Activated B cell treated with CpG ODN at 0.5 μM for 24 hours (primary cell): ENCODE measurements at regions of chr10 and their contacts with region 1.

Region 1: GRCh38 chr10:124388823-124389612 is 29.7 kb downstream of the OAT start:
- DNase-seq: peak; percentile 97
- ATAC-seq: peak; percentile 99
- H3K4me3 Mint-ChIP-seq: peak overlapping the region; percentile 58
- H3K27ac Mint-ChIP-seq: no peak overlapping the region
- H3K4me1 Mint-ChIP-seq: peaks cover 3% of the 10 kb centered on the region
- H3K27me3 Mint-ChIP-seq: peaks cover 7% of the 10 kb centered on the region
- CTCF ChIP-seq: peak; percentile 86

Region 2: DNA sequence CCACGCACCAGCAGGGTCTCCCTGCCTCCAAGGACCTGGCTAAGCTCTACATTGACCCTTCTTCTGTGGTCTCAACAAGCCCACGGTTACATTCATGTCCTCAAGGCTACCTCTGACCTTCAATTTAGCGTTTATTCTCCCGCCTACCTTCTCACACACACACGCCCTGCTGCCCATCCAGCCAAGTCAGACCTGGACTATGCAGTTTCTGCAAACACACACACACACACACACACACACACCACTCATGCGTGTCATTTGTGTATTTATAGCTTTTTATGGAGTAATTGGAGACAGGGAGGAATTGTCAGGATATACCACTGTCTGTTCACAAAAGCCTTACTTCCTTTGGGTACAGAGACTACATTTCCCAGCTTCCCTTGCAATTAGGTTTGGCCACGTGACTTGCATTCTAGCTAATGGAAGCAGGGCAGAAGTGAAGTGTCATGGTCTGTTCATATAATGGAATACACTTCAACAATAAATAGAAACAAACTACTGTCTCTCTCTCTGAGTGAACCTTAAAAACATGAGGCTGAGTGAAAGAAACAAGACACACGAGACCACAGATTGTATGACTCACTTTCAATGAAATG is 443.6 kb before region 1 on chr10:
- CTCF ChIA-PET with region 1: no interaction called
- POLR2A ChIA-PET with region 1: no interaction called
- intact Hi-C with region 1: no loop called
- DNase-seq: no peak
- ATAC-seq: no peak
- H3K4me3 Mint-ChIP-seq: no peak overlapping the region
- H3K27ac Mint-ChIP-seq: no peak overlapping the region
- H3K4me1 Mint-ChIP-seq: no peaks in the 10 kb centered on the region
- H3K27me3 Mint-ChIP-seq: peaks cover 14% of the 10 kb centered on the region
- CTCF ChIP-seq: no peak

Region 3: DNA sequence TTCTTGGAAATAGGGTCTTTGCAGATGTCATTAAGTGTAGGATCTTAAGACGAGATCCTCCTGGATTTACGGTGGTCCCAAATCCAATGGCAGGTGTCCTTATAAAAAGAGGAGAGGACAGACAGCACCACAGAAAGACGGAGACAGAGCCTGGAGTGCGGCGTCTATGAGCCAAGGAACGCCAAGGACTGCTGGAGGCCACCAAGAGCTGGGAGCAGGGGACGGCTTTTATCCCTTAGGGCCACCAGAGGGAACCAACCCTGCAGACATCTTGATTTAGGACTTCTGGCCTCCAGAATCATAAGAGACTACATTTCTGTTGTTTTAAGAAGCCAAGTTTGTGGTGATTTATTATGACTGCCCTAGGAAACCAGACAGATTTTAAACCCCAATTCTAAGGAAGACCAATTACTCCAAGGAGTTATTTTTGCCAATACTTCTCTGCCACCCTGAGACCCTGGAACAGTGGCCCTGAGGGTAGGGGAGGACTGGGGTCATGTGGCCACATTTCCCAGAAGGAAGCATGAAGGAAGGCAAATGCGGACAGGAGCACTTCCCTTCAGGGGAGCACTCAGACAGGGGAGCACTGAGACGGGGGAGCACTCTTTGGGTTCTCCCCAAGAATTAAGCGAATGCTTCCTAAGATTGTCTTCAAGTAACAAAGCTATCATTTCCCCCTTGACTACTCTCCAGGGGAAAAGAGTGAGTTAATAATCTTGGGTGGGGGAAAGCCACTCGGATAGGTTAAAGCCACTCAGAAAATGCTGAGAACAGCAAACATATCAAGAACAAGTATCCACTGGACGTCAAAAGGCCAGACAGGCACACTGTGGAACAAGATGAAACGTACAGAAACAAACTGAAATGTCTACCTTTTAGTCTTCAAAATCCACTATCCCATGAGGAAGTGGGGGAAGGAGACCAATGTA is 363.1 kb before region 1 on chr10:
- CTCF ChIA-PET with region 1: interaction called, 27 read pairs
- POLR2A ChIA-PET with region 1: no interaction called
- intact Hi-C with region 1: loop called (anchors 1 kb)
- DNase-seq: no peak
- ATAC-seq: peak; percentile 57
- H3K4me3 Mint-ChIP-seq: no peak overlapping the region
- H3K27ac Mint-ChIP-seq: no peak overlapping the region
- H3K4me1 Mint-ChIP-seq: peaks cover 11% of the 10 kb centered on the region
- H3K27me3 Mint-ChIP-seq: no peaks in the 10 kb centered on the region
- CTCF ChIP-seq: no peak

Region 4: DNA sequence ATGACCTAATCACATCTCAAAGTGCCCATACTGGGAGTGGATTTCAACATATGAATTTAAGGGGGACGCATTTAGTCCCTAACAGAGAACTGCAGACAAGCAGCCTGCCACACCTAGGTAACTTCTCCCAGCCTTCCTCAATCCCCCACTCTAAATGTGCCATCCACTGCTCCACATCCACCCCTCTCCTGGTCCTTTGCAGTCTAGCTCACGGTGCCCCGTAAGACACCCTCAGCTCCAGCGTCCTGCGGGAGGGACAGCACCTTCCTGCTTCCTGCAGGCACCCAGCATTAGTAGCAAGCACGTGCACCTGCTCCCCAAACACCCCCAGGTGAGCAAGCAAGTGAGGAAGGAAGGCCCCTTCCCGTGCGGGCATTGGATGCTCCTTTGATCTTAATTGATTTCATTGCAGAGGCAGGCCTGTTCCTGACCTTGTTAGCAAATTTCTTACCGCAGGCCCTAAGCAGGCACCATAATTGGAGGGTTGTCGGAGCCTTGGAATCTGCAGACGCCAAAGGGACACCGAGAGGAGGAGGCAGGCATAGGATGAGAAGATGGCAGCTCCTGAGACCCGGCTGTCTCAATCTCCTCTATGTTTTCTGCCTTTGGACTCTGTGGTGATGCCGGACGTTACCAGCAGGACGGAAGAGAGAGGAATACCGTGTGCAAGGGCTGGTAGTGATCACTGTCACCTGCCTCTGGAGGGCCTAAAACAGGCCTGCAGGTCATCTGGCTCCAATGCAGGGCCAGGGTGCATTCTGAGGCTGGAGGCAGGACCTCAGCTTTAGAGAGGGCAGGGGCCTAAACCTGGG is 219.8 kb before region 1 on chr10:
- CTCF ChIA-PET with region 1: no interaction called
- POLR2A ChIA-PET with region 1: no interaction called
- intact Hi-C with region 1: no loop called
- DNase-seq: no peak
- ATAC-seq: no peak
- H3K4me3 Mint-ChIP-seq: no peak overlapping the region
- H3K27ac Mint-ChIP-seq: no peak overlapping the region
- H3K4me1 Mint-ChIP-seq: no peaks in the 10 kb centered on the region
- H3K27me3 Mint-ChIP-seq: no peaks in the 10 kb centered on the region
- CTCF ChIP-seq: no peak

Region 5: GRCh38 chr10:124221356-124222317 is 167.4 kb before region 1 on chr10:
- CTCF ChIA-PET with region 1: interaction called, 7 read pairs
- POLR2A ChIA-PET with region 1: no interaction called
- intact Hi-C with region 1: loop called (anchors 2 kb)
- DNase-seq: no peak
- ATAC-seq: peak; percentile 16
- H3K4me3 Mint-ChIP-seq: peak overlapping the region; percentile 74
- H3K27ac Mint-ChIP-seq: no peak overlapping the region
- H3K4me1 Mint-ChIP-seq: peaks cover 33% of the 10 kb centered on the region
- H3K27me3 Mint-ChIP-seq: no peaks in the 10 kb centered on the region
- CTCF ChIP-seq: no peak

Region 6: GRCh38 chr10:124403548-124403947 is 14.5 kb after region 1 on chr10:
- CTCF ChIA-PET with region 1: interaction called, 9 read pairs
- POLR2A ChIA-PET with region 1: no interaction called
- intact Hi-C with region 1: loop called (anchors 1 kb)
- DNase-seq: no peak
- ATAC-seq: peak; percentile 100
- H3K4me3 Mint-ChIP-seq: no peak overlapping the region
- H3K27ac Mint-ChIP-seq: peak overlapping the region; percentile 59
- H3K4me1 Mint-ChIP-seq: peaks cover 9% of the 10 kb centered on the region
- H3K27me3 Mint-ChIP-seq: no peaks in the 10 kb centered on the region
- CTCF ChIP-seq: no peak

Region 7: GRCh38 chr10:124802313-124802675 is 413.3 kb after region 1 on chr10:
- CTCF ChIA-PET with region 1: no interaction called
- POLR2A ChIA-PET with region 1: no interaction called
- intact Hi-C with region 1: no loop called
- DNase-seq: no peak
- ATAC-seq: peak; percentile 61
- H3K4me3 Mint-ChIP-seq: peak overlapping the region; percentile 92
- H3K27ac Mint-ChIP-seq: peak overlapping the region; percentile 93
- H3K4me1 Mint-ChIP-seq: peaks cover 18% of the 10 kb centered on the region
- H3K27me3 Mint-ChIP-seq: peaks cover 2% of the 10 kb centered on the region
- CTCF ChIP-seq: no peak